ENCODE measurements at regions of chr15 and their contacts with region 1.

Region 1: DNA sequence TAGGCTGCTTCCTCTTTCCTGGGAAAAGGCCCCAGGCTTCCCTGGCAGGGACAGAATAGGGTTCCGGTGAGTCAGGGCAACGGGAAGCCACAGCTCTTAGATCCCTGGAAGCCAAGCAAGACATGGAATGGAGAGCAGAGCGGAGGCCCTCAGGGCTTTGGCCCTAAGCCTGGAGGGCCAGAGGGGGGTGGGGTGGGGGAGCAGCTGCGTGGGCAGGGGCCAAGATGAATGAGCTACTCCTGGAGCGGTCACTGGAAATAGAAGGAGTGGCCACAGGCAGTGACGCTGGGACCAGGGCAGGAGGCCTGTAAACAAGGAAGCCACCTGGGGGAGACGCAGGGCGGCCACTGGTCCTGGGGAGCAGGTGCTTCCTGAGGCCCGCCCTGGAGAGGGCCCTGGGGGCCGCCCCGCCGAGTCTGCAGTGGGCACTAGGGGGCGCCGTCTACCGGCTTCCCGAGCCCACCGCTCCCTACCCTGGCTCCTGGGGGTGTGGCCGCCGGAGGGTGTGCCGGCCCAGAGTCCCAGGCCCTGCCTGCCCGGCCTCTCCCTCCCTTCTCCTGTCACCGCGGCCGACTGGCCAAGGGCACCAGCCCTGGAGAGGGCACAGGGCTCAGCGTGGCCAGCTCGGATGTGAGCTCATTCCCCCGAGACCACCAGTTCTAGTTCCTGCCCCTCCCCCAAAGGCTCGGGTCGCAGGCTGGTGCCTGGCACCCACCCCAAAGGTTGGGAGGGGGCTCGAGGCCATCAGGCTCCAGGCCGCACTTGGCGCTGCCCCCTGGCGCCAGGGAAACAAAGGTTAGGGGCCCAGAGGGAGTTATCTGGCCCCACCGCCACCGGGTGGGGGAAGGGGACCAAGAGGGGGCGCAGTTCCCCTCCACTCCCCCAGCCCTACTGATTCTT is 12.1 kb downstream of the VPS18 start:
- DNase-seq: peak; percentile 81 to 96
- H3K4me3 ChIP-seq: peak overlapping the region; percentile 17
- H3K4me1 ChIP-seq: peaks cover 8% of the 10 kb centered on the region
- H3K27me3 ChIP-seq: no peaks in the 10 kb centered on the region

Region 2: GRCh38 chr15:39251413-39252133 is 1654.8 kb before region 1 on chr15:
- in situ Hi-C with region 1: no loop called
- DNase-seq: no peak
- H3K4me3 ChIP-seq: no peak overlapping the region
- H3K4me1 ChIP-seq: no peaks in the 10 kb centered on the region
- H3K27me3 ChIP-seq: no peaks in the 10 kb centered on the region

Region 3: GRCh38 chr15:41022487-41023090 is 116.2 kb after region 1 on chr15:
- in situ Hi-C with region 1: loop called (anchors 10 kb)
- DNase-seq: peak; percentile 28 to 59
- H3K4me3 ChIP-seq: no peak overlapping the region
- H3K4me1 ChIP-seq: no peaks in the 10 kb centered on the region
- H3K27me3 ChIP-seq: no peaks in the 10 kb centered on the region

Region 4: GRCh38 chr15:41180206-41180789 is 274.0 kb after region 1 on chr15:
- in situ Hi-C with region 1: loop called (anchors 5 kb)
- DNase-seq: peak; percentile 49 to 74
- H3K4me3 ChIP-seq: no peak overlapping the region
- H3K4me1 ChIP-seq: peaks cover 11% of the 10 kb centered on the region
- H3K27me3 ChIP-seq: no peaks in the 10 kb centered on the region